Left colon (tissue), 2 donors: ENCODE measurements at regions of chr17 and their contacts with region 1.

Region 1: DNA sequence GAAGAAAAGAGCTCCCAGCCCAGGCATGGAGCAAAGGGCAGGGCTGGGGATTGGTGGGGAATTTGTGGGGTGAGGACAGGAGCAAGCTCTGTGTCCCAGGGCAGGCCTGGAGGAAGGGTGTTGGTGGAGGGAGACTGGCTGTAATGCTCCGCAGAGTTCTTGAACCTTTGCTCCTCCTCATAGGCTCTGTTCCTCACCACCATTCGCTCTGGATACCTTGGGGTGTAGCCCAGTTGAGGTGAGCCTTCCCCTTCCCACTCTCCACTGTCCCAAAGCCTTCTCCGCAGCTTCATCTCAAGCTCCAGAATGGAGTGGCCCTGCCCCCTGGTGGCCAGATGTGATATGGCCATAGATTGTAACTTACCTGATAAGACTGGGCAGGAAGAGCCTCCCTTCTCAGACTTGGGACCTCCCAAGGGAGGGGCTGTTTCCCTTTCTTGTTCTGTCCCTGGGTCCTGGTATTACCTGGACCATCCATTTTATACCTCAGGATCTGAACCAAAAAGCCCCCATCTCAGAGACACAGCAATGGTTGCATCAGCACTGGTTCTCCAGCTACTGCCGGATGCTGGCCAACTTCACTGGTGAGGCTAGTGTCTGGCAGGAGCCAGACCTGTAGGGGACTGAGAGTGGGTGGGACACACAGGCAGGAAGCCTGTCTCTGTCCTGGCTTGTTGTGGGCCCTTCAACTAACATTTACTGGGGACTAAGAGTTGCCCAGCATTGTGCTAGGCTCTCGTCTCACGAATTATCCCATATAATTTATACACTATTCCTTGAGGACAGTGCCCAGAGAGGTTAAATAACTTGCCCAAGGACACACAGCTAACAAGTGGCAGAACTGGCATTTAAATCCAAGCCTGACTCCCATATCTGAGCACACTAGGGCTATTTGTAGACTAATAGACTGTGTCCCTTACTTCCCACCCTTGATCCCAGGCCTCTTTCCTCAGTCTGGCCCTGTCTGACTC is 19.1 kb upstream of the STAC2 start:
- DNase-seq: peak; percentile 74 to 91
- ATAC-seq: peak; percentile 91

Region 2: GRCh38 chr17:39209317-39210092 is 35.4 kb before region 1 on chr17:
- intact Hi-C with region 1: loop called in 1 of 2 experiments (anchors 5 kb)
- DNase-seq: peak; percentile 68 to 76
- ATAC-seq: peak; percentile 31